Right ventricle myocardium superior (tissue), 1 donor: ENCODE measurements at regions of chr22 and their contacts with region 1.

Region 1: GRCh38 chr22:30754971-30755756 is 60.5 kb downstream of the OSBP2 start:
- DNase-seq: peak; percentile 48
- ATAC-seq: peak; percentile 77

Region 2: DNA sequence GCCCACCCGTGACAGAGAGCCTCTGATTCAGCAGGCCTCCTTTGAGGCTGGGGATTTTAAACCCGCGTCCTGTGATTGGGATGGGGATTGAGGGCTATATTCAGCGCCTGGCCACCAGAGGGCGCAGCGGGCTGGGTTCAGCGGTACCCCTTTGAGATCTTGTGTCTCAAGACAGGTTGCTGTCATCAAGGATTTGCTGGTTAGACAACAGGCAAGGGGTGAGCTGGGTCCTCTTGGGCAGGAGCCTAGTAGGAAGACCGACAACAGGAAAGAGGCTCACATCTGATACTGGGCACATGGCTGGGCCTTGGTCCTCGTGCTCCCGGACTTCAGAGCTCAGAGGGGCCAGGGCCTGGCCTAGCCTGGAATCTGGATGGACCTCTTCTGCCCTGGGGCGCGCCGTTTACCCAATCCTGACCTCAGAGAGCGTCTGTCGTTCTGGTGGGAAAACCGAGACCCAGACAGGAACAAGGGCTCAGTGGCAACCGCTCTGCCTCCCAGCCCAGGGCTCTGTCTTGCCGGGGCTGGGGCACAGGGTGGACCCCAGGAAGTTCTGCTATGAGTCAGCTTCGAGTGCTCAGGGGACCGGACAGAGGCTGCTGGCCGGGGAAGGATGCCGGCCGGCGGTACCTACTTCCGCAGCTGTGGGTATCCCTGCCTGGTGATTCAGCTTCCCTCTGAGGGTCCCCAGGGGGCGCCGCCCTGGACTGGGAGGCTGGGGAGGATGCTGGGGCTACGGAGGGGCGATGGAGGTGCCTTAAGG is 120.5 kb before region 1 on chr22:
- intact Hi-C with region 1: loop called (anchors 5 kb)
- DNase-seq: peak; percentile 91
- ATAC-seq: peak; percentile 82

Region 3: GRCh38 chr22:30694171-30694639 is 61.0 kb before region 1 on chr22:
- intact Hi-C with region 1: no loop called
- DNase-seq: peak; percentile 64
- ATAC-seq: peak; percentile 71